ENCODE measurements at regions of chr9 and their contacts with region 1.

Region 1: GRCh38 chr9:100515578-100516494 is 42.9 kb downstream of the TMEFF1 start:
- DNase-seq: no peak
- ATAC-seq: no peak

Region 2: DNA sequence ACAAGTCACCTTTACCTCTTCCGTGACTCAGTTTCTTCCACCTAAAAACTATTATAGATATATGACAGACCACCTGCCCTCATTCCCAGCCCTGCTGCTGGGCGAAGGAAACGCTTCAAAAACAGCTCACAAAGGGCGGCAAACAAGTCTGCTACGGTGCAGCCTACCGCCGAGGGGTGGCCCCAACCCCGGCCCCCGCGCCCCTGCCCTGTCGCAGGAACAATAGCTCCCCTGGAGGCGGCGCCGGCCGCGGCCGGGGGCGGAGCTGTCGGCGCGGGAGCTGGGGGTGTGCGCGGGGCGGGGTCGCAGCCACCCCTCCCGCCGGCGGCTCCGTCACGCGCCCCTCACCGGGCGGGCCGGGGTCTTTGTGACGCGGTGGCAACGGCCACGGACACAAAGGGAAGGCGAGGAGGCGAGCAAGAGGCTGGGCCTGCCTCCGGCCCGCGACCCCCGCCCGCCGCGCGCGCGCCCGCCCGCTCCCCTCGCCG is 43.0 kb before region 1 on chr9 and contains the start of gene TMEFF1:
- intact Hi-C with region 1: no loop called
- DNase-seq: peak; percentile 28
- ATAC-seq: peak; percentile 70 to 85
- total RNA-seq, gene TMEFF1: 0.35 TPM in 1 of 2 donors, not detected in the other

Region 3: GRCh38 chr9:100575765-100576386 is 60.0 kb after region 1 on chr9:
- intact Hi-C with region 1: loop called in 1 of 2 experiments (anchors 10 kb)
- DNase-seq: no peak
- ATAC-seq: no peak